Body of pancreas (tissue), 4 donors: ENCODE measurements at regions of chr4 and their contacts with region 1.

Region 1: DNA sequence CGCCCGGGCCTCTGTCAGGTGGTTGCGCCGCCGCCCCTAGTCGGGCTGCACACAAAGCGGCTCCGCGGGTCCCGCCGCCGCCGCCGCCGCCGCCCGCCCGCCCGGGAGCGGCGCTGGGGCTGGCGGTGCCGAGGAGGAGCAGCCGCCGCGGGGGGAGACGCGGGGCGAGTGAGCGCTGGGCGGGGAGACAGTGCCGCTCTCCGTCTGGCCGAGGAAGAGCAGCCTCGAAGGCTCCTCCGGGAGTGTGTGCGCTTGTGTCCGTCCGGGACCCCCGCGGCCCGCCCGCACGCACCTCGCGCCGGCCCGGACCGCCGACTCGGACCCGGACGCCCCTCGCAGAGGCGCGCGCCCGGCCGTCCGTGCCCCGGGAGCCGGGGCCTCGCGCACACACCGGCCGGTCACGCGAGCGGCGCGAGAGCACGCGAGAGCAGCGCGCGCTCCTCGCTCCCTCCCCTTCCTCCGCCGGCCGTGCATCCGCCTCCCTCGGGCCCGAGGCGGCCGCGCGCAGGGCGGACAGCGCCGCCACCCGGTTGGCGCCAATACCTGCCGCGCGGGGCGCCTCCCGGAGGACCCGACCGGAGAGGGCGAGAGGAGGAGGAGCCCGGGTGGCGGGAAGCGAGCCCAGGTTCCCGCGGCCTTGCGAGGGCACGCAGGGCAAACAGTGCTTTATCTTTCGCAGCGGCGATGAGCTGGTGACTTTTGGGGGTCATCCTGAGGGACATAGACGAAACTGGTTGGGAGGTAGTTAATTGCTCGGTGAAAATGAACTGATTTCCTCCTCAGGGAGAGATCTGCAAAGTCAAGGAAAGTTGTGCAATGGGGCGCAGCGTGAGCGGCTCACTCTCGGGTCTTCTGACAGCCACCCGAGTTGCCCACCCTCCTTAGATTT is at the start of gene PDS5A:
- DNase-seq: peak; percentile 88 to 91 (median 89)
- ATAC-seq: peak; percentile 91
- H3K4me3 ChIP-seq: peak within 1 kb of the TSS; percentile 74 to 98
- H3K27ac ChIP-seq: peak within 1 kb of the TSS; percentile 84 to 95 (median 88)
- H3K4me1 ChIP-seq: peaks cover 25% of the 10 kb centered on the region
- H3K27me3 ChIP-seq: no peaks in the 10 kb centered on the region
- CTCF ChIP-seq: peak; percentile 83 to 99 (median 94)
- POLR2A ChIP-seq: peak in 2 of 3 donors; percentile 45 to 47
- total RNA-seq, gene PDS5A: 44.9 to 50.8 TPM

Region 2: GRCh38 chr4:39469429-39470077 is 508.2 kb before region 1 on chr4:
- intact Hi-C with region 1: loop called (anchors 10 kb)
- DNase-seq: peak; percentile 49 to 71 (median 56)
- ATAC-seq: peak; percentile 90
- H3K4me3 ChIP-seq: no peak overlapping the region
- H3K27ac ChIP-seq: peak overlapping the region in 3 of 4 donors; percentile 22 to 50 (median 27)
- H3K4me1 ChIP-seq: peaks cover 5% of the 10 kb centered on the region
- H3K27me3 ChIP-seq: no peaks in the 10 kb centered on the region
- CTCF ChIP-seq: peak; percentile 35 to 88 (median 86)
- POLR2A ChIP-seq: no peak

Region 3: DNA sequence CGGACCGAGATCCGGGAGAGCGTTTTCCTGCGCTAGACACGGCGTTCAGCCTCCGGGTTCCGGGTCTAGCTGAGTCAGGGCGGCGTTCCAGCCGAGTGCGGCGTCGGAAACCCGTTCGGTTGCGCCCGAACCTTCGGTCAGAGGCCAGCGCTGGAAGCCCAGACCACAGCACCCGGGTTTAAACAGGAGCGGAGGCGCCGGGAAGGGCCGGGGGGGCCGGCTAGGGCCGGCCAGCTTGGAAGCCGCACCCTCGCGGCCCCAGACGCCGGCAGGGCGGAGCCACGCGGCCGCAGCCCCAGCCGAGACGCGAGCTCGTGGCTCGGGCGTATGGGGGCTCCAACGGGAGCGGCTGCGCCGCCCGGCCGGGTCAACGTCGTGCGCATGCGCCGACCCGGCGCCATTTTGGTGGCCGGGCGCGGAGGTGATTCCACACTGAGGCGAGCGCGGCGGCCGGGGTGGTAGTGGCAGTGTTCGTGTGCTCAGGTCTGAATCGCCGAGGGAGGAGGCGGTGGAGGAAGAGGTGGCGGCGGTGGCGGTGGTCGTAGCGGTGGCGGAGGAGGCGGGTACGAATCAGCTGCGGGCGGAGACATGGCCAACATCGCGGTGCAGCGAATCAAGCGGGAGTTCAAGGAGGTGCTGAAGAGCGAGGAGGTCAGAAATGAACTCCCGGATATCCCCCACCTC is 279.9 kb before region 1 on chr4 and contains the start of gene UBE2K:
- intact Hi-C with region 1: loop called (anchors 10 kb)
- DNase-seq: peak; percentile 88 to 90 (median 90)
- ATAC-seq: peak; percentile 95
- H3K4me3 ChIP-seq: peak within 1 kb of the TSS; percentile 58 to 65
- H3K27ac ChIP-seq: peak within 1 kb of the TSS; percentile 92 to 96 (median 94)
- H3K4me1 ChIP-seq: peaks cover 33% of the 10 kb centered on the region
- H3K27me3 ChIP-seq: no peaks in the 10 kb centered on the region
- CTCF ChIP-seq: peak in 1 of 7 experiments; percentile 25
- POLR2A ChIP-seq: peak; percentile 68 to 90 (median 86)
- total RNA-seq, gene UBE2K: 12.2 to 19.5 TPM

Region 4: GRCh38 chr4:40672536-40673526 is 695.1 kb after region 1 on chr4:
- intact Hi-C with region 1: no loop called
- DNase-seq: peak in 1 of 4 donors; percentile 44
- ATAC-seq: no peak
- H3K4me3 ChIP-seq: no peak overlapping the region
- H3K27ac ChIP-seq: no peak overlapping the region
- H3K4me1 ChIP-seq: no peaks in the 10 kb centered on the region
- H3K27me3 ChIP-seq: no peaks in the 10 kb centered on the region
- CTCF ChIP-seq: no peak
- POLR2A ChIP-seq: no peak